Activated CD4-positive, alpha-beta T cell treated with anti-CD3 and anti-CD28 coated beads for 36 hours (primary cell): ENCODE measurements at regions of chr10 and their contacts with region 1.

Region 1: DNA sequence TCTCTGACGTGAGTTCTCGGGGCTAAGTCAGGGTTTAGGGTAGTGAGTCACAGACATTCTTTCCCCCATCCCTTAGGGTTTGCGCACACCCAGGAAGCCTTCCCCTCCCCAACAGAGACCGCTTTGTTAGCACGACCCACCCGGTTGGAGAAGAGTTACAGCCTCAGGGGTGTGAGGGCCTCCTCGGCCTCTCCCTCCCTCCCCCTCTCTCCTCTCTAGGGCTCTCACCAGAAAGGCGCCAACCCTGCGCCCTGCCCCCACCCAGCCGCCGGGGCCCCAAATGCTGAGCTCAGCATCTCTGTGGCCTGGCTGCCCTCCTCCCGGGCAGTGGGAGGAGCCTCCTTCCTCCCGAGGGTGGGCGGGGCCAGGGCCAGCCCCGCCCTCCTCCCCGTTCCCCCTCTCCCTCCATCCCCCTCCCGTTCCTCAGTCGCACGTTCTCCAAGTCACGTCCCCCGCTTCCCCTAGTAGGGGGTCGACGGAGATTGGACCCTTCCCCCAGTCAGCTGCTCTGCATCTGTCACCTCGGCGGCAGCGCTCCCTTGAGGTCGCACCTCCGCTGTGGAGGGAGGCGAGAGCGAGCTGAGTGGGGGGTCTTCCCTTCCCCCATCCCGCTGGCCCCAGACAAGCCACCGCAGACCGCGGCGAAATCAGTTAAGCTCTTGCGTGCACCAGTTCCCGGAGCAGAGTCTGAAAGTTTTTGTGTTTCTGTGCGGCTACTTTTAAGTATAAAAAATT is 13.0 kb upstream of the DDIT4 start:
- DNase-seq: peak; percentile 97
- ATAC-seq: peak; percentile 75
- H3K4me3 Mint-ChIP-seq: peak overlapping the region; percentile 78
- H3K27ac Mint-ChIP-seq: peak overlapping the region; percentile 97
- H3K4me1 Mint-ChIP-seq: peaks cover 70% of the 10 kb centered on the region
- H3K27me3 Mint-ChIP-seq: no peaks in the 10 kb centered on the region

Region 2: GRCh38 chr10:72162978-72163377 is 97.8 kb before region 1 on chr10:
- CTCF ChIA-PET with region 1: no interaction called
- POLR2A ChIA-PET with region 1: no interaction called
- intact Hi-C with region 1: loop called in 1 of 2 experiments (anchors 1 kb)
- DNase-seq: peak; percentile 25
- ATAC-seq: peak; percentile 94
- H3K4me3 Mint-ChIP-seq: no peak overlapping the region
- H3K27ac Mint-ChIP-seq: peak overlapping the region; percentile 85
- H3K4me1 Mint-ChIP-seq: peaks cover 35% of the 10 kb centered on the region
- H3K27me3 Mint-ChIP-seq: no peaks in the 10 kb centered on the region

Region 3: DNA sequence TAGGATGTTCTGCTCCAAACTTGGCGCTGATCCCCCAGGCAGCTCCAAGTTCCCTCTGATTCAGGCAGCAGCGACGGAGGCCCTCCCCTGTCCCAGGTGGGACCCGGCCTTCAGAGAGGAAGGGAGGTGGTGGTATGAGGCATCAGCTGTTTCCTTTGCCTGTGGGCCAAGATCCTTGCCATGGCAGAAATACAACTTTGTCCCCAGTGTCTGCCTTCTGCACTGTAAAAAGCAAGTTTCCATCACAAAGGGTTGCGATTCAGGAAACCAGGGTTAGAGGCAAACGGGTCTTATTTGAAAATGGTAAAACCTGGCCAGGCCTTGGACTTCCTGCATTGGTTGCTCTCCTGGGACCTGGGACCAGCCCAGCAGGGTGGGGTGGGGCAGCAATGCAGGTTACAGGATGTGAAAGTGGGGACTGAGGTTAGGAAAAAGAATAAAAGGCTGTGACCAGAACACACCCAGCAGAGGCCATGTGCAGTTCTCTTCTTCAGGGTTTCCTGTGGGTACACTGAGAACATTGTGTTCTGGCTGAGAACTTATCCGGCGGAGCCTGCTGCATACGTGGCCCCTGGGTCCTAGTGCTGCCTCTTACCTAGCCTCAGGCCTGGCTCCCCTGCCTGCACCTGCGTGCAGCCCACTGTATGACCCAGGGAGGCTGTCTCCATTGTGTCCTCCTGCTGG is 12.1 kb before region 1 on chr10:
- CTCF ChIA-PET with region 1: interaction called, 7 read pairs
- POLR2A ChIA-PET with region 1: interaction called, 15 read pairs
- intact Hi-C with region 1: loop called in 1 of 2 experiments (anchors 1 kb)
- DNase-seq: peak; percentile 84
- ATAC-seq: peak; percentile 91
- H3K4me3 Mint-ChIP-seq: peak overlapping the region; percentile 71
- H3K27ac Mint-ChIP-seq: peak overlapping the region; percentile 89
- H3K4me1 Mint-ChIP-seq: peaks cover 82% of the 10 kb centered on the region
- H3K27me3 Mint-ChIP-seq: no peaks in the 10 kb centered on the region

Region 4: DNA sequence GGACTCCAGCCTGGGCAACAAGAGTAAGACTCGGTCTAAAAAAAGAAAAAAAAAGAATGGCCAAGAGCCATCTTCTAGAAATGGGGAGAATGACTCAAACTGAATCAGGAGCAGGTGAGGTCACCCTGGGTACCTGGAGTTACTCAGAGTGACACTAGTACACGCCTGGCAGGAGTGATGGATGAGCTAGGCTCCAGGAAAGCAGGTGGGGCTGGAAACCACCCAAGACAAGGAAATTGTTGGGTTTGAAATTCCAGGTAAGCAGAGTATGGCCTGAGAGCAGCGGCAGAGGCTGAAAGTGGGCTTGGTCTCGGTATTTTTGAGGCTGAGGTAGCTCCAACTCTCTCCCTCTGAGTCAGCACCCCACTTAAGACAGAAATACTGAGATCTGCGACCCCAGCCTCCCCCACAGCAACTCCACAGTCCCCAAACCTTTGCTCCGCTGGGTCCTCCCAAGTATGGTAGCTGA is 31.5 kb after region 1 on chr10:
- CTCF ChIA-PET with region 1: interaction called, 8 read pairs
- POLR2A ChIA-PET with region 1: interaction called, 34 read pairs
- intact Hi-C with region 1: loop called (anchors 1 kb)
- DNase-seq: peak; percentile 84
- ATAC-seq: peak; percentile 57
- H3K4me3 Mint-ChIP-seq: peak overlapping the region; percentile 56
- H3K27ac Mint-ChIP-seq: peak overlapping the region; percentile 99
- H3K4me1 Mint-ChIP-seq: peaks cover 63% of the 10 kb centered on the region
- H3K27me3 Mint-ChIP-seq: no peaks in the 10 kb centered on the region

Region 5: DNA sequence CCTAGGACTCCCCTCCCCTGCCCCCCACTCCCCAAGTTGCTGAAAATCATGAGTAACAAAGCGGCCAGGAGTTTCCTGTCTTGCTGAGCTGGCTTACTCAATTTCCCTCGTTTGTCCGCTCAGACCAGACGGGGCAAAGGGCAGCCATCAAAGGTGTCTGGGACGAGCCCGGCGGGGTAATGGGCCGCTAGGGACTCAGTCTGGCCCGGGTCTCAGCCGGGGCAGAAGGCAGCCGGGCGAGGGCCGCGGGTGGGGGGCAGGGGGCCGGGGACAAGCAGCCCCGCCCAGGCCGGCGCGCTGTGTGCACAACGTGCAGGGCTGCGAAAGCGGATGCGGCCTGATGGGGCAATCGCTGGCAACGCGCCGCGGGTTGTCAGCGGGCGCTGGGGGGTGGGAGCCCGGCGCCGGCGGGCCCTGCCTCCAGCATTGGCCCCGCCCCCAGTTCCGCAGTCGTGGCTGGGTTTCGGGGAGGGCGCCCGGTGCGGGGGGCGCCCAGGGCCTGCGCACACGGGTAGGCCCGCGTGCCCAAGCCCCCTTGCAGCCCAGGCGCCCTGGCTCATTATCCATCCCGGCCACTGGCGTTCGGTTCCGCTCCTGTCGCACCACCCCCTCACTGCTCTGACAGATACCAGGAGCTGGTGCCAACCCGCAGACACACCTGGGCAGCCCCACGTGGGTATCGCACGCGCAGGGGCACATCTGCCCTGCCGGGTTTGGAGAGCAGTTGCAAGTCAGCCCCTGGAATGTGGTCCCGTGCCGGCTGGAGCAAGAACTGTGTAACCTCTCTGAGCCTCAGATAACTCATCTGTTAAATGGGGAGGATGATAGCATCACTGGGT is 58.9 kb after region 1 on chr10:
- CTCF ChIA-PET with region 1: no interaction called
- POLR2A ChIA-PET with region 1: interaction called, 12 read pairs
- intact Hi-C with region 1: loop called (anchors 1 kb)
- DNase-seq: peak; percentile 95
- ATAC-seq: peak; percentile 48
- H3K4me3 Mint-ChIP-seq: peak overlapping the region; percentile 86
- H3K27ac Mint-ChIP-seq: peak overlapping the region; percentile 100
- H3K4me1 Mint-ChIP-seq: peaks cover 84% of the 10 kb centered on the region
- H3K27me3 Mint-ChIP-seq: no peaks in the 10 kb centered on the region